ENCODE measurements at regions of chr22 and their contacts with region 1.

Region 1: DNA sequence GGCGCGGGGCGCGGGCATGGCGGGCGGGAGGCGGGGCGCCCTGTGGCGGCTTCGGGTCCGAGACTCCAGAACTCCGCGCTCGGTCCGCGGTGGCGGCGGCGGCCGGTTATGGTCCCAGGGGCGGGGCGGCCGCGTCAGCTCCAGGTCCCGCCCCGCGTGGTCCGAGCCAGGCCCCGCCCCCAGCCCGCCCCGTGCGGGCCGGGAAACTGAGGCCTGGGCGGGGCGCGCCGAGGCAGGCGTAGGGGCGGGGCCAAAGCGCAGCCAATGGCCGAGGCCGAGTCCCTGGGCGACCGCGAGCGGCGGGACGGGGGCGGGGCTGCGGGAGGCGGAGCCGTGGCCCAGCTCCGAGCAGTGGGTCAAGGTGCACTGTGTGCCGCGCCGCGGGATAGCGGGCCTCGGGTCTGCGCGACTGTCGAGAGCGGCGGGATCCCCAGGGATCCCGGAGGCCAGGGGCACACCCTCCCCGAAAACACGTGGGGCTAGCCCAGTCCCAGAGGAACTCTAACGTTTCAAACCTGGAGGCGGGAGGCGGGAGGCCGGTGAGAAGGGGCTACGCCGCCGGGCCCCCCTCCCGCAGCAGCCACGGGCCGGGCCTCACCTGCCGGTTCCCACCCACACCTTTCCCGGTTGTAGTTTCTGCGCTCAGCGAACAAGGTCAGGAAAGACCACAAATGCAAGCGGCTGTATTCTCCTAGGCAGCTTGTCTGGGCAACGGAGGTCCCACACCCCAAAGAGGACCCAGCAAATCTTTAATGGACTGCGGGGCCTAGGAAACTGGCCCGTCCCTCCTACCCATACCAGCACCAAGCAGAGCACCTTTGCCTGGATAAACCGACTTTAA is at the start of gene SLC25A1:
- DNase-seq: peak; percentile 96
- H3K4me3 ChIP-seq: peak within 1 kb of the TSS; percentile 78 to 94 (median 83)
- H3K27ac ChIP-seq: peak within 1 kb of the TSS; percentile 90 to 96 (median 94)
- H3K4me1 ChIP-seq: peaks cover 0 to 41% (median 32%) of the 10 kb centered on the region in 4 donors
- H3K27me3 ChIP-seq: no peaks in the 10 kb centered on the region
- CTCF ChIP-seq: no peak
- EP300 ChIP-seq: no peak
- POLR2A ChIP-seq: peak in 1 of 2 donors; percentile 32
- total RNA-seq, gene SLC25A1: 28.2 to 45.3 (median 33.4) TPM

Region 2: GRCh38 chr22:19122143-19122751 is 56.6 kb before region 1 on chr22 and contains the start of gene DGCR2:
- intact Hi-C with region 1: loop called (anchors 1 kb)
- DNase-seq: peak; percentile 98
- H3K4me3 ChIP-seq: peak within 1 kb of the TSS; percentile 81 to 96 (median 90)
- H3K27ac ChIP-seq: peak within 1 kb of the TSS; percentile 93 to 96 (median 94)
- H3K4me1 ChIP-seq: peaks cover 0 to 49% (median 46%) of the 10 kb centered on the region in 4 donors
- H3K27me3 ChIP-seq: no peaks in the 10 kb centered on the region
- CTCF ChIP-seq: no peak
- EP300 ChIP-seq: no peak
- POLR2A ChIP-seq: peak; percentile 14 to 35
- total RNA-seq, gene DGCR2: 25.5 to 36.8 (median 32.7) TPM

Region 3: DNA sequence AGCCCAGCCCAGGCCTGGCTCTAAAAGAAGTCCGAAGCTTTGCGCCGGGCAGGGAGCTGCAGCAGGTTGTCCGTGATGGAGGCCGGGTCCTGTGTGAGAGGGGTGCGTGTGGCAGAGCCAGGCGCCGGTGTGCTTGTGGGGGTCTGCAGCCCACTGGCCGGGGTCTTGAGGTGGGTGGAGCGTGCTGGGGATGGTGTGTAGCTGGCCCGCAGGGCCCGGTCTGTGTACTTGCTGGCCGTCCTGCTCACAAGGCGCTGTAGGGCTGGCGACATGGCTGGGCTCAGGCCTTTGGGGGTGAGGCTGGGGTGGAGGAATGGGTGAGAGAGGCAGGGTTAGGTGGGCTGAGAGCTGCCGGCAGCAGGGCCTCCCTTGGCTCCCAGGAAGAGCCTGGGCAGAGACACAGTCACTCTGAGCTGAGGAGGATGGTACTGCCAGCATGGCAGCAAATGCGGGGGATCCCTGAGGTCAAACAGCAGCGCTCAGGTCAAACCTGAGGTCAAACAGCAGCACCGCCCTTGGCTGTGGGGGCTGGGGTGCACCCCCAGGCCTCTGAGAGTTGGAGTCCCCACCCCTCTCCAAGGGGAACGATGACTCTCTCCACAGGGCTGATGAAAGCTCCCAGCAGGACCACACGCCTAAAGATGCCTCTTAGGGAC is 44.6 kb before region 1 on chr22:
- intact Hi-C with region 1: no loop called
- DNase-seq: no peak
- H3K4me3 ChIP-seq: no peak overlapping the region
- H3K27ac ChIP-seq: no peak overlapping the region
- H3K4me1 ChIP-seq: no peaks in the 10 kb centered on the region
- H3K27me3 ChIP-seq: no peaks in the 10 kb centered on the region
- CTCF ChIP-seq: no peak
- EP300 ChIP-seq: no peak
- POLR2A ChIP-seq: no peak

Region 4: DNA sequence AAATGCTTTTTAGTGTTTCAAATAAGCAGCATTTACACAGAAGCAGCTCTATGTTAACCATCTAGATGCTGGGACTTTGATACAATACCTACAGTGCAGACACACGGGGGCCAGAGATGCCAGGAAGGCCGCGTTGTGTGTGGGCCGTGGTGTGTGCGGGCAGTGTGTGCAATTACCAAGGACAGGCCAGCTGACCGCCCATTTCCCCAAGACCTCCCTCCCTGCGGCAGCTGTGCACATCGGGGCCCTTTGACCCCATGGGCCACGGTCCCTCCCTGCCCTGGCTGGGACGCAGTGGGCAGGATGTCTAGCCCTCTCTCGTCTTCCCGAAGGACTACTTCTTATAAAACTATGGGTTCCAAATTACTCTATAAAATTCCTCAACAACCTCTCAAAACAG is 74.3 kb after region 1 on chr22:
- intact Hi-C with region 1: no loop called
- DNase-seq: no peak
- H3K4me3 ChIP-seq: no peak overlapping the region
- H3K27ac ChIP-seq: no peak overlapping the region
- H3K4me1 ChIP-seq: no peaks in the 10 kb centered on the region
- H3K27me3 ChIP-seq: no peaks in the 10 kb centered on the region
- CTCF ChIP-seq: no peak
- EP300 ChIP-seq: no peak
- POLR2A ChIP-seq: no peak

Region 5: GRCh38 chr22:19291580-19292457 is 112.9 kb after region 1 on chr22 and contains the start of gene CLTCL1:
- intact Hi-C with region 1: loop called (anchors 2 kb)
- DNase-seq: peak; percentile 90
- H3K4me3 ChIP-seq: peak within 1 kb of the TSS; percentile 80 to 95 (median 88)
- H3K27ac ChIP-seq: peak within 1 kb of the TSS; percentile 70 to 82 (median 76)
- H3K4me1 ChIP-seq: peaks cover 0 to 23% (median 13%) of the 10 kb centered on the region in 4 donors
- H3K27me3 ChIP-seq: no peaks in the 10 kb centered on the region
- CTCF ChIP-seq: no peak
- EP300 ChIP-seq: no peak
- POLR2A ChIP-seq: no peak
- total RNA-seq, gene CLTCL1: 2.4 to 5.0 (median 4.0) TPM

Region 6: GRCh38 chr22:19432133-19432851 is 253.4 kb after region 1 on chr22 and contains the start of gene MRPL40:
- intact Hi-C with region 1: loop called (anchors 5 kb)
- DNase-seq: peak; percentile 96
- H3K4me3 ChIP-seq: peak within 1 kb of the TSS; percentile 85 to 93 (median 90)
- H3K27ac ChIP-seq: peak within 1 kb of the TSS; percentile 91 to 99 (median 96)
- H3K4me1 ChIP-seq: peaks cover 0 to 30% (median 29%) of the 10 kb centered on the region in 4 donors
- H3K27me3 ChIP-seq: no peaks in the 10 kb centered on the region
- CTCF ChIP-seq: no peak
- EP300 ChIP-seq: peak in 1 of 4 donors; percentile 46
- POLR2A ChIP-seq: peak; percentile 79 to 82
- total RNA-seq, gene MRPL40: 19.5 to 32.3 (median 26.4) TPM

Region 7: GRCh38 chr22:19447388-19448075 is 268.7 kb after region 1 on chr22 and contains the start of gene C22orf39:
- intact Hi-C with region 1: loop called (anchors 5 kb)
- DNase-seq: peak; percentile 96
- H3K4me3 ChIP-seq: peak within 1 kb of the TSS; percentile 64 to 94 (median 72)
- H3K27ac ChIP-seq: peak within 1 kb of the TSS; percentile 88 to 93 (median 92)
- H3K4me1 ChIP-seq: peaks cover 0 to 27% (median 23%) of the 10 kb centered on the region in 4 donors
- H3K27me3 ChIP-seq: no peaks in the 10 kb centered on the region
- CTCF ChIP-seq: no peak
- EP300 ChIP-seq: peak in 1 of 4 donors; percentile 12
- POLR2A ChIP-seq: peak; percentile 53 to 63
- total RNA-seq, gene C22orf39: 88.1 to 135 (median 102) TPM

Region 8: DNA sequence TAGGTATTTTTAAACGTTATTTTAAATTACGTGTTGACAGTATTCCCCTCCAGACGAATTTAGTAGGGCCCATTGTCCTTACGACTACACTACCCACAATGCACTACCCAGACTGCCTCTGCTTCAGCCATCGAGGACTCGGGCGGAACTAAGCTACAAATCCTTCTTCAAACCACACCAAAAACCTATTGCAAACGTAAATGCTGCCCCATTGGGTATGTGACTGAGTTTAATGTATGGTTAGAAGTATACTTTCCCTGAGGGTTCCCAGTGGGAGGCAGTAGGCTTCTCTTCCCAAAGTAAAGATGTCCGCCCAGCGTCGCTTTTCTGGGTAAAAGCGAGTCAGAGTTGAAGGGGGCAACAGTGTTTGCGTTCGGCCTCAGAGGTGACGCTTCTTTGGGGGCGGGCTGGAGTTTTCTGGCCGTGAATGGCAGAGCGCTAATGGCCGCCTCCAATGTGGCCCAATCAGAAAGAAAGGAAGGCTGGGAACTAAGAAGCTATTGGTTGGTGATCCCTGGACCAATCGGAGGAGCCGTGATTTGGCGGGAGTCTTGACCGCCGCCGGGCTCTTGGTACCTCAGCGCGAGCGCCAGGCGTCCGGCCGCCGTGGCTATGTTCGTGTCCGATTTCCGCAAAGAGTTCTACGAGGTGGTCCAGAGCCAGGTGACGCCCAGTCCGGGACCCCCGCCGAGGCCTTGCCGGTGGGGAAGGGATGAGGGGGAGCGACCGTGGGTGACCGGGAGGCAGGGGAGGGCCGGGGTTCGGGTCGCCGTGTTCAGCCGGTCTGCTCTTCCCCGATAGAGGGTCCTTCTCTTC is 300.7 kb after region 1 on chr22 and contains the start of gene CDC45:
- intact Hi-C with region 1: loop called (anchors 2 kb)
- DNase-seq: peak; percentile 98
- H3K4me3 ChIP-seq: peak within 1 kb of the TSS; percentile 82 to 97 (median 86)
- H3K27ac ChIP-seq: peak within 1 kb of the TSS; percentile 87 to 94 (median 91)
- H3K4me1 ChIP-seq: peaks cover 0 to 35% (median 21%) of the 10 kb centered on the region in 4 donors
- H3K27me3 ChIP-seq: no peaks in the 10 kb centered on the region
- CTCF ChIP-seq: no peak
- EP300 ChIP-seq: no peak
- POLR2A ChIP-seq: no peak
- total RNA-seq, gene CDC45: 0.14 TPM in 1 of 4 donors, not detected in the others